ENCODE measurements at regions of chr3 and their contacts with region 1.

Region 1: GRCh38 chr3:142586803-142587406 is 8.4 kb upstream of the ATR start:
- DNase-seq: no peak
- H3K4me3 Mint-ChIP-seq: no peak overlapping the region
- H3K27ac Mint-ChIP-seq: no peak overlapping the region
- H3K4me1 Mint-ChIP-seq: no peaks in the 10 kb centered on the region
- H3K27me3 Mint-ChIP-seq: peaks cover 29% of the 10 kb centered on the region

Region 2: DNA sequence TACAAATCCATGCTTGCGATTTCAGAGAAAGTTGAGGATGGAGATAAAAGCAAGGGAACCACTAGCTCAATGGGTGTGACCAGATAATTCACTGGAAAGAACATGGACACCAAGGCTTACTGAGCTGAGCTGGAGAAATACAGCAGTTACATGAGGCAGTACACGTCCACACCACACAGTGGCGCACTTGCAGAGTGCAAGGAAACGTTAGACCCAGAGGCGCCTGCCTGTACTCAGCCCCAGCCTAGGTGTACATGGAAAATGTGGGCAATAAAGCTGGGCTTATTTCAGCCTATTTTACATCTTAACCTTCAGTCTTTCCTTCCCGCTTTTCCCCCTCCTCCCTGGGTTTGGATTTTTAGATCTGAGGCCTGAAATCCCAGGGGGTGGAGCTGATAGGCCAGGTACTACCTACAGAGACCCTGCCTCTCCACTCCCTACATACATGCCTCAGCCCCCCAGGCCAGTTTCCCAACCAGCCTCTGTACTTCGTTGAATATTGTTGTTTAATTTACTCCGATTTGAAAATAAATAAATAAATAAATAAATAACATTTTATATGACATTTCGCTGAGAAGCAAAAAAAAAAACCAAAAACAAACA is 241.9 kb after region 1 on chr3:
- intact Hi-C with region 1: loop called (anchors 5 kb)
- DNase-seq: peak; percentile 44
- H3K4me3 Mint-ChIP-seq: no peak overlapping the region
- H3K27ac Mint-ChIP-seq: no peak overlapping the region
- H3K4me1 Mint-ChIP-seq: no peaks in the 10 kb centered on the region
- H3K27me3 Mint-ChIP-seq: peaks cover 8% of the 10 kb centered on the region

Region 3: DNA sequence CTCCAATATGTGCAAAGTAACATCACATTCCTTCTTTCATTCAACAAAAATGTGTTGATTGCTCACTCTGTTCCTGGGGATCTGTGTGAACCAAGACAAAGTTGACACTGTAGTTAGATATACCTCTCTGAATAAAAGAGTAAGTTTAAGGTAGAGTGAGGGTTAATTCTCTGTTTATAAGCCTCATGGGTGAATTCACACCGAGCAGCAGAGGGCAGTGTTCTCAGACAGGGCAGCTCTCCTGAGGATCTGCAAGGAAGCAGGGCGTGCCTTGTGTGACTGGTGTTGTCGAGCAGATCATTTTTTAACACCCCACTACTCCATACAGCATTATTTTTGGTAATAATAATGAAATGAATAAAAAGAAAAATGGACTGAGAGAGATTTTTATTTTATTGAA is 342.2 kb after region 1 on chr3:
- intact Hi-C with region 1: loop called (anchors 1 kb)
- DNase-seq: peak; percentile 22
- H3K4me3 Mint-ChIP-seq: no peak overlapping the region
- H3K27ac Mint-ChIP-seq: no peak overlapping the region
- H3K4me1 Mint-ChIP-seq: no peaks in the 10 kb centered on the region
- H3K27me3 Mint-ChIP-seq: peaks cover 24% of the 10 kb centered on the region

Region 4: GRCh38 chr3:142987080-142987700 is 400.3 kb after region 1 on chr3:
- intact Hi-C with region 1: loop called (anchors 1 kb)
- DNase-seq: no peak
- H3K4me3 Mint-ChIP-seq: no peak overlapping the region
- H3K27ac Mint-ChIP-seq: no peak overlapping the region
- H3K4me1 Mint-ChIP-seq: peaks cover 7% of the 10 kb centered on the region
- H3K27me3 Mint-ChIP-seq: peaks cover 20% of the 10 kb centered on the region

Region 5: DNA sequence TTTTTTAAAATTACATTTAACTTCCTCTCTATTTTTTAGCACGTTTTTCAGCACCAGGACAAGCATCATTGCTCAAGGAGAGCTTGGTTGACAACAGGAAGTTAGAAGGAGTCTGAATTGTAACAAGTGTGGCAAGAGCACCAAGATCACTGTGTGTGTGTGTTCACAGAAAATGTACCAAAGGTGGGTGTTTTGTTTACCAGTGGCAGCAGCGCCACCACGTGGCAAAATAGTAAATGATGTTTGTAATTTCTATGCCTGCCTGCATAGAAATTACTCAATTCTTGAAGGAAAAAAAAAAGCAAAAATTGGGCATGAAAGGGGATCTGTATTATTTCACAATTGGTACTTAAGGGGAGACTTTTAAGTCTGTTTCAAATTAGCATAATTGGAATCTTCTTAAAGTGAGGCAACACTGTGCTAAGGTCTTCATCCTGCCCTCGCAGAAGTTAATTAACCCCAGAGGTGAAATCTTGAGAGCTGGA is 407.1 kb after region 1 on chr3:
- intact Hi-C with region 1: loop called (anchors 1 kb)
- DNase-seq: peak; percentile 39
- H3K4me3 Mint-ChIP-seq: no peak overlapping the region
- H3K27ac Mint-ChIP-seq: peak overlapping the region; percentile 4
- H3K4me1 Mint-ChIP-seq: peaks cover 8% of the 10 kb centered on the region
- H3K27me3 Mint-ChIP-seq: peaks cover 14% of the 10 kb centered on the region